AG04450 (cell line): ENCODE measurements at regions of chr9 and their contacts with region 1.

Region 1: DNA sequence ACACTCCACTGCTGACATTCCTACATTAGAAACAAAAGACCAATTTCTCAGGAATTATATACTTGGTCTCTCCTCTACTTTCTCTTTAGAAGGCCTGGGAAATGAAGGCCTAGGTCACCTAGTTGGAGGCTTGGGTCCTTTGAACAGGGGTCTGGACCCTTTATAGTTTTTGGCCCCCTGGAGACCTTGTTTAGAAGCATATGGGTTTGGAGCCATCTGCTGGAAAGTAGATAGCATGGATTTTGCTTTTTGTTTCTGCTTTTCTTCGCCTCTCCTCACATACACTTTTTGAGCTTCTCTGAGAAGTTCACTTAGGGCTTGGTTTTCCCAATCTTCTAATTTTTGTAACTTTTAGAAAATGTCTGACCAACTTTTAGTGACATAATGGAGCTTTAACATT is 67.1 kb upstream of the CDK20 start:
- DNase-seq: no peak
- H3K4me3 ChIP-seq: no peak overlapping the region
- H3K27ac ChIP-seq: no peak overlapping the region
- H3K27me3 ChIP-seq: no peaks in the 10 kb centered on the region
- CTCF ChIP-seq: peak; percentile 64

Region 2: DNA sequence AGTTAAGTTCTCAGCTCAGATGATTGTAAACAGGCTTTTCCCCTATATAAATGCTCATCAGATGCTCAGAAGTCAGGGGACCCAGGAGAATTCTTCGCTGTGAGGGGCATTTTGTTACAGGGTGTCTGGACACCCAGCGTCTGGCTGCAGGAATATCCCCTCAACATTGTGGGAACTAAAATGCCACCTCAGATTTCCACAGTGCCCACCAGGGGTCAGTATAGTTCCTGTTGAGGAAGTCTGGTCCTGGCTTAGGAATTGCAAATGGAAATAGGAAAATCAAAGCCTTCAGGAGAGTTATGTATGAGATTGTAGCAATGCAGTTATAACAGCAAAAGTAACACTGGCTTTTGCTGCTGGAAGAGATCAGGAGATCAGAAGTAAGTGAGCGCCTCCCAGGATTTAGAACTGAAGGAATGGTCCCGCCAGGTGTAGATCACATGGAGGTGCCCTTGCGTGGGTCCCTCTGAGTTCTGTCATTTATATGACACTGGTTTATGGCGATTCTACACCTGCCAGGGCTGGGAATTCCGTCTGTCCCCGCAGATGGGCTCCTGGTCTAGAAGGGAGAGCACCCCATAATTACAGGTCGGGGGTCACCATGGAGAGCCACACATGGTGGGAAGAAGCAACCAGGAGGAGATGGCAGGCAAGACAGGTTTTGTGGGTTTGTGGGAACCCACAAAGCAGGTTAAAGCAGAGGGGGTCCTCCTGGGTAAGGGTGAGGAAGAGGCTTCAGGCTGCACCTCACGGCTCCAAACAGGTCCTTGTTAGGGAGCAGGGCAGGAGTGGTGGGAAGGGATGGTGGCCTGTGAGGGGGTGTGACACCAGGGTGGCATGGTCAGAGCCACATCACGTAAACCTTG is 362.6 kb before region 1 on chr9:
- CTCF ChIA-PET with region 1: interaction called, 16 read pairs
- POLR2A ChIA-PET with region 1: interaction called, 3 read pairs
- DNase-seq: peak; percentile 50
- H3K4me3 ChIP-seq: no peak overlapping the region
- H3K27ac ChIP-seq: no peak overlapping the region
- H3K27me3 ChIP-seq: peaks cover 5% of the 10 kb centered on the region
- CTCF ChIP-seq: peak; percentile 90

Region 3: GRCh38 chr9:88015606-88016005 is 25.8 kb before region 1 on chr9:
- CTCF ChIA-PET with region 1: no interaction called
- POLR2A ChIA-PET with region 1: no interaction called
- DNase-seq: no peak
- H3K4me3 ChIP-seq: no peak overlapping the region
- H3K27ac ChIP-seq: no peak overlapping the region
- H3K27me3 ChIP-seq: no peaks in the 10 kb centered on the region
- CTCF ChIP-seq: no peak